ENCODE measurements at regions of chr19 and their contacts with region 1.

Region 1: GRCh38 chr19:41753936-41754529 is 1.3 kb upstream of the CEACAM6 start:
- DNase-seq: peak; percentile 43 to 76 (median 63)
- ATAC-seq: peak; percentile 95
- H3K4me3 ChIP-seq: no peak overlapping the region
- H3K4me3 Mint-ChIP-seq: no peak overlapping the region
- H3K27ac ChIP-seq: no peak overlapping the region
- H3K27ac Mint-ChIP-seq: peak overlapping the region in 2 of 9 donors; percentile 5 to 85
- H3K4me1 ChIP-seq: no peaks in the 10 kb centered on the region
- H3K4me1 Mint-ChIP-seq: peaks cover 4 to 6% (median 5%) of the 10 kb centered on the region in 7 donors
- H3K27me3 ChIP-seq: no peaks in the 10 kb centered on the region
- H3K27me3 Mint-ChIP-seq: peaks cover 20 to 57% (median 30%) of the 10 kb centered on the region in 5 donors

Region 2: DNA sequence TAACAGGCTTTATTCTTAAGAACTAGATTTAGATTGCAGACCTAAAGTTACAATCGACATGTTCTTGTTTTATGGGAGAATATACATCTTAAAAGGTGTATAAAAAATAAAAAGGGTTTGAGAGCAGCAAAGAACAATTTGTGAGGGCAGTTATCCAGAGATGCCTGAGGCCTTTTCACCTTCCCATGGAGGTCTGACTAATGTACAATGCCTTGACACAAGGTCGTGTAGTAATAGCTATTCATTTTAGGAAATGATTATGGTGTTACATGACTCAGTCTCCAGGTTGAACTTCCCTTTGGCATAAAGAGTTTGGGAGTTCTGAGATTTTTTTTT is 21.3 kb after region 1 on chr19:
- CTCF ChIA-PET with region 1: interaction called, 22 read pairs
- POLR2A ChIA-PET with region 1: interaction called, 3 read pairs
- intact Hi-C with region 1: loop called in 1 of 2 experiments (anchors 2 kb)
- DNase-seq: no peak
- ATAC-seq: no peak
- H3K4me3 ChIP-seq: no peak overlapping the region
- H3K4me3 Mint-ChIP-seq: peak overlapping the region in 7 of 10 donors; percentile 71 to 88 (median 81)
- H3K27ac ChIP-seq: no peak overlapping the region
- H3K27ac Mint-ChIP-seq: peak overlapping the region in 1 of 9 donors; percentile 30
- H3K4me1 ChIP-seq: peaks cover 12 to 36% of the 10 kb centered on the region in 2 donors
- H3K4me1 Mint-ChIP-seq: peaks cover 29 to 48% (median 45%) of the 10 kb centered on the region in 7 donors
- H3K27me3 ChIP-seq: peaks cover 0 to 9% of the 10 kb centered on the region in 2 donors
- H3K27me3 Mint-ChIP-seq: peaks cover 33 to 92% (median 51%) of the 10 kb centered on the region in 5 donors

Region 3: GRCh38 chr19:41821003-41821735 is 67.1 kb after region 1 on chr19:
- CTCF ChIA-PET with region 1: interaction called, 6 read pairs
- POLR2A ChIA-PET with region 1: no interaction called
- intact Hi-C with region 1: loop called (anchors 1 to 2 kb)
- DNase-seq: peak in 8 of 9 donors; percentile 41 to 68 (median 59)
- ATAC-seq: peak; percentile 91
- H3K4me3 ChIP-seq: no peak overlapping the region
- H3K4me3 Mint-ChIP-seq: no peak overlapping the region
- H3K27ac ChIP-seq: no peak overlapping the region
- H3K27ac Mint-ChIP-seq: no peak overlapping the region
- H3K4me1 ChIP-seq: no peaks in the 10 kb centered on the region
- H3K4me1 Mint-ChIP-seq: peaks cover 0 to 6% (median 0%) of the 10 kb centered on the region in 7 donors
- H3K27me3 ChIP-seq: no peaks in the 10 kb centered on the region
- H3K27me3 Mint-ChIP-seq: peaks cover 8 to 46% (median 17%) of the 10 kb centered on the region in 5 donors